ENCODE measurements at regions of chr17 and their contacts with region 1.

Region 1: GRCh38 chr17:49496183-49496866 is 1.2 kb downstream of the NGFR start:
- DNase-seq: peak; percentile 32 to 96 (median 78)

Region 2: GRCh38 chr17:49434821-49435670 is 61.3 kb before region 1 on chr17:
- intact Hi-C with region 1: loop called (anchors 10 kb)
- DNase-seq: peak in 4 of 10 donors; percentile 34 to 59 (median 52)

Measured in posterior cingulate gyrus (tissue), 11 donors.